ENCODE measurements at regions of chr6 and their contacts with region 1.

Region 1: GRCh38 chr6:137165375-137166246 is 7.8 kb downstream of the IL22RA2 start:
- DNase-seq: peak; percentile 85
- ATAC-seq: peak; percentile 86
- H3K4me3 ChIP-seq: no peak overlapping the region
- H3K27ac ChIP-seq: peak overlapping the region; percentile 93
- H3K4me1 ChIP-seq: peaks cover 37% of the 10 kb centered on the region
- H3K27me3 ChIP-seq: no peaks in the 10 kb centered on the region
- CTCF ChIP-seq: peak; percentile 57 to 81 (median 58)
- EP300 ChIP-seq: 0 out of 4 replicates have a peak, but pooled peaks of 1 of the 2 experiments have one; percentile 47
- POLR2A ChIP-seq: no peak
- RAD21 ChIP-seq: peak; percentile 95

Region 2: GRCh38 chr6:136967876-136968752 is 197.5 kb before region 1 on chr6:
- CTCF ChIA-PET with region 1: interaction called, 3 read pairs
- POLR2A ChIA-PET with region 1: no interaction called
- RAD21 ChIA-PET with region 1: interaction called, 3 read pairs
- SMC1A ChIA-PET with region 1: interaction called, 6 read pairs
- in situ Hi-C with region 1: no loop called
- intact Hi-C with region 1: loop called (anchors 1 kb)
- DNase-seq: peak; percentile 35
- ATAC-seq: peak; percentile 99
- H3K4me3 ChIP-seq: no peak overlapping the region
- H3K27ac ChIP-seq: no peak overlapping the region
- H3K4me1 ChIP-seq: no peaks in the 10 kb centered on the region
- H3K27me3 ChIP-seq: no peaks in the 10 kb centered on the region
- CTCF ChIP-seq: peak; percentile 62 to 82 (median 71); a peak in 5 of 6 replicates
- EP300 ChIP-seq: no peak
- POLR2A ChIP-seq: no peak
- RAD21 ChIP-seq: peak; percentile 78

Region 3: DNA sequence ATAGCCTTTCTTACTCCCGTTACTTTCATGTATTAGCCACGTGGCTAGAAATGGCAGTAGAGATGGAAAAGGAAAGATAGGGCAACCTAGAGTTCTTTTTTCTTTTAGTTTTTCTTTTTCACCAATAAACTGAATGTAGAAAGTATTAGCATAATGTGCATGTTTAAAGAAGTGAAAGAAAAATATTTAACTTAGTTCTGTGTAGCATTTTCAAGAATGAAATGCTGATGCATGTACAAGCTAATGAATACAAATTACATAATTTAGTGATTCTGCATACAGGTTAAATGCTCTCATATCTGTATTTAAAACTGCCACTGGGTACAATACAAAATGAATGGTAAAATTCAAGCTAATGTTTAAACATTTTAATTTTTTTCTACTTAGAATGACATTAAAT is 98.2 kb before region 1 on chr6:
- CTCF ChIA-PET with region 1: no interaction called
- POLR2A ChIA-PET with region 1: no interaction called
- RAD21 ChIA-PET with region 1: no interaction called
- SMC1A ChIA-PET with region 1: no interaction called
- in situ Hi-C with region 1: no loop called
- intact Hi-C with region 1: no loop called
- DNase-seq: no peak
- ATAC-seq: no peak
- H3K4me3 ChIP-seq: no peak overlapping the region
- H3K27ac ChIP-seq: no peak overlapping the region
- H3K4me1 ChIP-seq: no peaks in the 10 kb centered on the region
- H3K27me3 ChIP-seq: no peaks in the 10 kb centered on the region; a peak in 1 of 4 replicates
- CTCF ChIP-seq: no peak
- EP300 ChIP-seq: no peak
- POLR2A ChIP-seq: no peak
- RAD21 ChIP-seq: no peak

Region 4: DNA sequence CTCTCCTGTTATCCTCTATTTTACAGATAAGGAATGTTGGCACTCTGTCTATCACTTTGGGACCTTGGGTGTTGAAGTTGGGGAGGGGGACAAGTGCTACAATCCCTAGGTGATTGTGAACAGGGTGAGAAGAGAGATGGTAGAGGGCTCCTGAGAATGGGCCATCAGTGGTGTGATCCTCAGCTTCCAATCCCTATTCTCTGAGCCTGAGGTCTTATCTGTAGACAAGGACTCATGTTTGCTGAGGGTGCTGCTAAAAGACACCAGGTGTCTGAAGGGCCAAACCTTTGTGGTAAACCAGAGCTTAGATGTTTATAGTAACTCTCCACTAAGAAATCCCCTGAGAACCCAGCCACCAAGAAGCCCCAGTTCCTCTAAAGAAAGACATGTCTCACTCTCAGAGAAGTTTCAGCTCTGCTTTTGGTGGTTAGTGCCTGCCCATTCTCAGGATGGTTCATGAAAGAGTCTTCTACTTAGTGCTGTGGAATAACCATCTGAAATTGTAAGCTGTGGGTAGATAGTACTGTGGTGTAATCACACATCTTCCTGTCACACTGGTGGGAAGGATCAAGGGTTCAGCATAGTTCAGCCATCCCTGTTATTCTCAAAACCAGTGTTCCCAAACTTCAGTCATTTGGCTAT is 62.6 kb before region 1 on chr6:
- CTCF ChIA-PET with region 1: interaction called, 160 read pairs
- POLR2A ChIA-PET with region 1: interaction called, 62 read pairs
- RAD21 ChIA-PET with region 1: interaction called, 500 read pairs
- SMC1A ChIA-PET with region 1: interaction called, 293 read pairs
- in situ Hi-C with region 1: loop called (anchors 5 kb)
- intact Hi-C with region 1: loop called (anchors 1 kb)
- DNase-seq: peak; percentile 100
- ATAC-seq: peak; percentile 82
- H3K4me3 ChIP-seq: no peak overlapping the region
- H3K27ac ChIP-seq: peak overlapping the region; percentile 98
- H3K4me1 ChIP-seq: peaks cover 73% of the 10 kb centered on the region
- H3K27me3 ChIP-seq: no peaks in the 10 kb centered on the region
- CTCF ChIP-seq: no peak
- EP300 ChIP-seq: peak; percentile 97
- POLR2A ChIP-seq: peak; percentile 65
- RAD21 ChIP-seq: peak; percentile 44

Region 5: GRCh38 chr6:137136065-137136464 is 29.5 kb before region 1 on chr6:
- CTCF ChIA-PET with region 1: interaction called, 3 read pairs
- POLR2A ChIA-PET with region 1: no interaction called
- RAD21 ChIA-PET with region 1: interaction called, 3 read pairs
- SMC1A ChIA-PET with region 1: interaction called, 10 read pairs
- in situ Hi-C with region 1: no loop called
- intact Hi-C with region 1: no loop called
- DNase-seq: no peak
- ATAC-seq: no peak
- H3K4me3 ChIP-seq: no peak overlapping the region
- H3K27ac ChIP-seq: no peak overlapping the region
- H3K4me1 ChIP-seq: no peaks in the 10 kb centered on the region
- H3K27me3 ChIP-seq: no peaks in the 10 kb centered on the region
- CTCF ChIP-seq: no peak
- EP300 ChIP-seq: no peak
- POLR2A ChIP-seq: no peak
- RAD21 ChIP-seq: no peak

Region 6: DNA sequence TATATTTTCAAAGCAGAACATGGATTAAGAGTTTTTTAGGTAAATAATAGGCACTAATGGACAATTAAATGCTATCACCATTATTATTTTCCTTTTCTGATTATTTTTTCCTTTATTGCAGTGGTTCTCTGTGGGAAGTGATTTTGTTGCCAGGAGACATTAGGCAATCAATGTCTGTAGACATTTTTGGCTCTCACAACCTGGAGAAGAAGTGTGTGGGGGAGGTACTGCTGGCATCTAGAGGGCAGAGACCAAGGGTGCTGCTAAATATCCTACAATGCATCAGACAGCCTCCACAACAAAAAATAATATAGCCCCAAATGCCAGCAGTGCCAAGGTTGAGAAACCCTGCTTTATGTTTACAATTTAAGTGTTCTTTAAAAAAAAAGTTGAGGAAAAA is 45.3 kb after region 1 on chr6:
- CTCF ChIA-PET with region 1: interaction called, 14 read pairs
- POLR2A ChIA-PET with region 1: interaction called, 18 read pairs
- RAD21 ChIA-PET with region 1: interaction called, 68 read pairs
- SMC1A ChIA-PET with region 1: interaction called, 70 read pairs
- in situ Hi-C with region 1: no loop called
- intact Hi-C with region 1: no loop called
- DNase-seq: no peak
- ATAC-seq: no peak
- H3K4me3 ChIP-seq: no peak overlapping the region
- H3K27ac ChIP-seq: no peak overlapping the region
- H3K4me1 ChIP-seq: peaks cover 9% of the 10 kb centered on the region; the same call in 1 of the 2 replicates
- H3K27me3 ChIP-seq: no peaks in the 10 kb centered on the region
- CTCF ChIP-seq: no peak
- EP300 ChIP-seq: no peak
- POLR2A ChIP-seq: no peak
- RAD21 ChIP-seq: no peak

Region 7: DNA sequence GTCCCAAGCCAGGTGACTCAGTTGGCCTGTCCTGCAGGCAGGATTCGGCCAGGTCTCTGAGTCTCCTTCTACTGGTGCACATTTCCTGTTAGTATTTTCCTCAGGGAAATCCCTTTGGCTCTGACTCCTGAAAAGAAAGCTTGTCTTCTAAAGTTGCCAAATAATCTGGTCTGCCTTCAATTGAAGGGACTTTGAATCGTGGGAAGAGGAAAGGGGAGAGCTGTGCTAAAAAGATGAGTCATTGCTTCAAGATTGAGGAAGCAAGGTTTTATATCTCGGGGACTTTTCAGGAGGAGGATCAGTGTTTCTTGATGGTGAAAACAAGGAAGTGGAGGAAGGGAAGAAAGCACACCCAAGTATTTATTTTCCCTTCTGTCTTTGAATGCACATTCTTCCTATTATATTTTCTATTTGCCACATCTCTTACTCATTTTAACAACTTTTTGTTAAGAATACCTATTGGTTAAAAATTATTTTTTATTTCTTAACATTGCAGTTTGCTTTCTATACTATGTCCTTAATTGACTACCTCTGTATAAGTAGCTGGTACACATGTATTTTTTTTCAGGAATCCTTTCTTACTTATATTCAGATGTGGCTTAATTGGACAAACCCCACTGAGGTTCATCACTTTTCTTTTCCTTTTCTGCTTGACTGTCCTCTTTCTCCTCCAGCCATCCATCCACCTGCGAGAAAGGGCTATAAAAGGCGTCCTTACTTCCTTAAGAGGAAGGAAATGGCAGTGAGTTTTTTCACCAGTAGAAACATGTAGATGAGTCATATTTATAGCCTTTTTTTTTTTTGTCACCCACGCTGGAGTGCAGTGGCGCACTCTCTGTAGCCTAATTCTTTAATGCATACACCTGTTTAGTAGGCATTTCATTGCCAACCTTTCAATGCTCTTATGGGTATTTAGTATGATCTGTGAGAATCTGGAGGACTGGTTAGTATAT is 68.6 kb after region 1 on chr6:
- CTCF ChIA-PET with region 1: interaction called, 10 read pairs
- POLR2A ChIA-PET with region 1: interaction called, 6 read pairs
- RAD21 ChIA-PET with region 1: interaction called, 44 read pairs
- SMC1A ChIA-PET with region 1: interaction called, 36 read pairs
- in situ Hi-C with region 1: no loop called
- intact Hi-C with region 1: no loop called
- DNase-seq: no peak
- ATAC-seq: peak; percentile 79
- H3K4me3 ChIP-seq: peak overlapping the region; percentile 28; the same call in 1 of the 2 replicates
- H3K27ac ChIP-seq: peak overlapping the region; percentile 76
- H3K4me1 ChIP-seq: peaks cover 52% of the 10 kb centered on the region
- H3K27me3 ChIP-seq: no peaks in the 10 kb centered on the region
- CTCF ChIP-seq: no peak
- EP300 ChIP-seq: peak in 1 of 2 experiments; percentile 60; a peak in 1 of 4 replicates
- POLR2A ChIP-seq: no peak
- RAD21 ChIP-seq: no peak

Region 8: GRCh38 chr6:137313928-137314855 is 148.6 kb after region 1 on chr6:
- CTCF ChIA-PET with region 1: interaction called, 22 read pairs
- POLR2A ChIA-PET with region 1: interaction called, 10 read pairs
- RAD21 ChIA-PET with region 1: interaction called, 21 read pairs
- SMC1A ChIA-PET with region 1: interaction called, 18 read pairs
- in situ Hi-C with region 1: loop called (anchors 5 kb)
- intact Hi-C with region 1: loop called (anchors 5 kb)
- DNase-seq: peak; percentile 43
- ATAC-seq: peak; percentile 97
- H3K4me3 ChIP-seq: no peak overlapping the region
- H3K27ac ChIP-seq: no peak overlapping the region
- H3K4me1 ChIP-seq: peaks cover 10% of the 10 kb centered on the region
- H3K27me3 ChIP-seq: no peaks in the 10 kb centered on the region
- CTCF ChIP-seq: peak; percentile 66 to 90 (median 79)
- EP300 ChIP-seq: no peak
- POLR2A ChIP-seq: no peak
- RAD21 ChIP-seq: peak; percentile 99

Region 9: DNA sequence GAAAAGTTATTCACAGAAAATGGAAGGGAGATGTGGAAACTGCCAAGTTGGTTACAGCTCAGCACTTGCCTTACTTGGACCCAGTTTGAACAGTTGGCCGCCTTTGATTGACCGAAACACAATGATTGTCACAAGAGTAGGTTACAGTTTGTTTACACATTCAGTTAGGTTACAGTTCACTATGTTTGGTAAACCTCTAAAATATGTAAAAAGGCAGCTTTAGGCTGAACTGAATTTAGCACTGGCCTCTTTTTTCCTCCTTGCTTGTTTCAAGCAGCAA is 212.4 kb after region 1 on chr6:
- CTCF ChIA-PET with region 1: no interaction called
- POLR2A ChIA-PET with region 1: no interaction called
- RAD21 ChIA-PET with region 1: no interaction called
- SMC1A ChIA-PET with region 1: no interaction called
- in situ Hi-C with region 1: no loop called
- intact Hi-C with region 1: no loop called
- DNase-seq: no peak
- ATAC-seq: no peak
- H3K4me3 ChIP-seq: no peak overlapping the region
- H3K27ac ChIP-seq: no peak overlapping the region
- H3K4me1 ChIP-seq: no peaks in the 10 kb centered on the region
- H3K27me3 ChIP-seq: no peaks in the 10 kb centered on the region
- CTCF ChIP-seq: no peak
- EP300 ChIP-seq: no peak
- POLR2A ChIP-seq: no peak
- RAD21 ChIP-seq: no peak

Measured in GM12878 (cell line).